K562 (cell line): ENCODE measurements at regions of chr6 and their contacts with region 1.

Region 1: DNA sequence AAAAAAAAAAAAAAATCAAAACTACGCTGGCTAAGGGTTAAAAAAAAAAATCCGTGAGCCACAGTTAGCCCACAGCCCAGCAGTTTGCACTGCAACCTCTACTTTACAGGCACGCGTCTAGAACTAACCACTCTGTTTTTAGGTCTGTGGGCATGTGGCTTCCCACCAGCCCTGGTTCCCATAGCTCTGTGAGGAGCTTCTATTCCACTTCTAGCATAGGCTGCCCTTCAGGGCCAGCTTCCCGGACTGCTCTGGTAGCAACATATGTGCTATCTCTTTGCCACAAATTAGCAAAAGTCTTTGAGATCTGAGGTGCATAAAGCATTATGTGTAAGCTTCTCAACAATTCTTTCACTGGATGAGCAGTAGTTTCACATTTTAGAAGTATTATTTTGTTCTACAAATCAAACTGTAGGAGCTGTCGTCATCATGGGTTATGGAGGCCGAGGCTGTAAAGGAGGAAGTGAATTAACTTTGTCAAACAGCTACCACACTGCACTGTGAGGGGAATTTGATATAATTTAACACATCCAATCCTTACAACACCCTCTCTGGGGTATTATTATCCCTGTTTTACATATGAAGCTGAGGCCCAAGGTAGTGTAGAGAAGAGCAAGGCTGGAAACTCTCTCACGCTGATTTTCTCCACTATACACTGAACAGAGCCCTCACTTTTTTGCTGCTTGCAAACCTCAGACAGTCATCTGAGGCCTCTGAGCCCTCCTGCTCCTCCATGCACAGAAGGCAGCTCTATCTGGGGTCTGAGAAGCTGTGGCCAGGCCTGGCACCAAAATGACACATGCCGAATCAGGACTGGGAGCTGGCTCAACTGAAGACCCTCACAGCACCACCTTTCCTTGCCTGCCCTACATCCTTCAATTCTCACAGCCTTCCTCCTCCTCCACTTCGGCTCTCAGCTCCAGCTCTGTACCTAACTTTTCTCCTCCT is 35.4 kb downstream of the MAN1A1 start:
- DNase-seq: peak in 1 of 4 experiments; percentile 35
- ATAC-seq: peak; percentile 30
- H3K4me3 ChIP-seq: no peak overlapping the region
- H3K27ac ChIP-seq: peak overlapping the region; percentile 91
- H3K4me1 ChIP-seq: peaks cover 40 to 83% of the 10 kb centered on the region in 2 experiments
- H3K27me3 ChIP-seq: no peaks in the 10 kb centered on the region
- CTCF ChIP-seq: no peak
- EP300 ChIP-seq: no peak
- POLR2A ChIP-seq: no peak
- RAD21 ChIP-seq: no peak

Region 2: DNA sequence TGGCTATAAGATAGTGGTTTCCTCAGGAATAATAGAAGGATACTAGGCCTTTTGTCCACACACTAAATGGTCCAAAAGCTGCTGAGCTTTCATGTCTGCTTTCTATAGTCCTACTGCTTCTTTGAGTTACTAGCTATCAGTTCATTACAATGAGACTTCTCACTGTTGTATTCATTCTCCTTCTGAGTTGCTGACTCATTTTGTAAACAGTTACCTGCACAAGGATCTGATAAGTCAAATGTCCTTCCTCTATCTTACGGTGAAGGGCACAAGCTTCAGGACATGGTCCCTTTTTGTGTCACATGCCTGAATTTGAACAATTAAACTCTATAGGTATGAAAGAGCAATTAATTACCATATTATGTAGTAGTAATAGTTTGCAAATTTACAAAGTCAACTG is 55.2 kb before region 1 on chr6:
- CTCF ChIA-PET with region 1: no interaction called
- POLR2A ChIA-PET with region 1: interaction called, 3 read pairs
- in situ Hi-C with region 1: no loop called
- intact Hi-C with region 1: loop called (anchors 2 kb)
- DNase-seq: peak in 3 of 4 experiments; percentile 30 to 64 (median 32)
- ATAC-seq: peak; percentile 49
- H3K4me3 ChIP-seq: no peak overlapping the region
- H3K27ac ChIP-seq: peak overlapping the region; percentile 50
- H3K4me1 ChIP-seq: peaks cover 6 to 44% of the 10 kb centered on the region in 2 experiments
- H3K27me3 ChIP-seq: no peaks in the 10 kb centered on the region
- CTCF ChIP-seq: no peak
- EP300 ChIP-seq: peak; percentile 83
- POLR2A ChIP-seq: no peak
- RAD21 ChIP-seq: no peak

Region 3: DNA sequence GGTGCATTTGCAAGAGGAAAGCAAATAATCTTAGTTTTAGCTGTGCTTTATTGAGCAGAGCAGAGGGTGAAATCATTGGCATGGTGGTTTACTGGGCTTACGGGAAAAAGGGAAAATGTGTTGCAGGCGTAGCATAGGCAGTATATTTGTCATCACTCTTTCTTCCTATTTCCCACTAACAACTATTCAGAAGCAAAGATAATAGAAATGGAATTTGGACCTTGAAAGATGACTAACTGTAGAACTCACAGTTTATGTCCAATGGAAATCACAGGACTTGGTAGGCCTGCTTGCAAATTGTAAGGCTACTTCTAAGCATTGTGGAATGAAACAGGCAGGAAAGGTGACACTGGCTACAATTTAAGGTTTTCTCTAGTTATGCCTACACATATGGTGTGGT is 647.2 kb after region 1 on chr6:
- CTCF ChIA-PET with region 1: no interaction called
- POLR2A ChIA-PET with region 1: no interaction called
- in situ Hi-C with region 1: no loop called
- intact Hi-C with region 1: no loop called
- DNase-seq: no peak
- ATAC-seq: no peak
- H3K4me3 ChIP-seq: no peak overlapping the region
- H3K27ac ChIP-seq: no peak overlapping the region
- H3K4me1 ChIP-seq: no peaks in the 10 kb centered on the region
- H3K27me3 ChIP-seq: no peaks in the 10 kb centered on the region
- CTCF ChIP-seq: no peak
- EP300 ChIP-seq: no peak
- POLR2A ChIP-seq: no peak
- RAD21 ChIP-seq: no peak